ENCODE measurements at regions of chr7 and their contacts with region 1.

Region 1: GRCh38 chr7:156473476-156474240 is 166.9 kb upstream of the RNF32 start:
- DNase-seq: peak; percentile 31
- H3K4me3 ChIP-seq: no peak overlapping the region
- H3K27ac ChIP-seq: no peak overlapping the region
- H3K4me1 ChIP-seq: peaks cover 8% of the 10 kb centered on the region
- H3K27me3 ChIP-seq: no peaks in the 10 kb centered on the region
- CTCF ChIP-seq: peak; percentile 67 to 69
- POLR2A ChIP-seq: no peak

Region 2: GRCh38 chr7:155796381-155797261 is 677.0 kb before region 1 on chr7:
- CTCF ChIA-PET with region 1: no interaction called
- POLR2A ChIA-PET with region 1: no interaction called
- dilution Hi-C with region 1: no loop called
- intact Hi-C with region 1: loop called (anchors 1 kb)
- DNase-seq: no peak
- H3K4me3 ChIP-seq: no peak overlapping the region
- H3K27ac ChIP-seq: no peak overlapping the region
- H3K4me1 ChIP-seq: no peaks in the 10 kb centered on the region
- H3K27me3 ChIP-seq: peaks cover 6 to 11% of the 10 kb centered on the region in 2 experiments
- CTCF ChIP-seq: peak; percentile 63 to 97
- POLR2A ChIP-seq: no peak

Region 3: GRCh38 chr7:155804897-155805825 is 668.5 kb before region 1 on chr7:
- CTCF ChIA-PET with region 1: interaction called, 4 read pairs
- POLR2A ChIA-PET with region 1: no interaction called
- dilution Hi-C with region 1: no loop called
- intact Hi-C with region 1: loop called (anchors 2 kb)
- DNase-seq: peak; percentile 69
- H3K4me3 ChIP-seq: peak overlapping the region; percentile 12 to 56 (median 31)
- H3K27ac ChIP-seq: no peak overlapping the region
- H3K4me1 ChIP-seq: peaks cover 29% of the 10 kb centered on the region
- H3K27me3 ChIP-seq: peaks cover 14 to 58% of the 10 kb centered on the region in 2 experiments
- CTCF ChIP-seq: peak; percentile 50 to 80
- POLR2A ChIP-seq: no peak

Region 4: DNA sequence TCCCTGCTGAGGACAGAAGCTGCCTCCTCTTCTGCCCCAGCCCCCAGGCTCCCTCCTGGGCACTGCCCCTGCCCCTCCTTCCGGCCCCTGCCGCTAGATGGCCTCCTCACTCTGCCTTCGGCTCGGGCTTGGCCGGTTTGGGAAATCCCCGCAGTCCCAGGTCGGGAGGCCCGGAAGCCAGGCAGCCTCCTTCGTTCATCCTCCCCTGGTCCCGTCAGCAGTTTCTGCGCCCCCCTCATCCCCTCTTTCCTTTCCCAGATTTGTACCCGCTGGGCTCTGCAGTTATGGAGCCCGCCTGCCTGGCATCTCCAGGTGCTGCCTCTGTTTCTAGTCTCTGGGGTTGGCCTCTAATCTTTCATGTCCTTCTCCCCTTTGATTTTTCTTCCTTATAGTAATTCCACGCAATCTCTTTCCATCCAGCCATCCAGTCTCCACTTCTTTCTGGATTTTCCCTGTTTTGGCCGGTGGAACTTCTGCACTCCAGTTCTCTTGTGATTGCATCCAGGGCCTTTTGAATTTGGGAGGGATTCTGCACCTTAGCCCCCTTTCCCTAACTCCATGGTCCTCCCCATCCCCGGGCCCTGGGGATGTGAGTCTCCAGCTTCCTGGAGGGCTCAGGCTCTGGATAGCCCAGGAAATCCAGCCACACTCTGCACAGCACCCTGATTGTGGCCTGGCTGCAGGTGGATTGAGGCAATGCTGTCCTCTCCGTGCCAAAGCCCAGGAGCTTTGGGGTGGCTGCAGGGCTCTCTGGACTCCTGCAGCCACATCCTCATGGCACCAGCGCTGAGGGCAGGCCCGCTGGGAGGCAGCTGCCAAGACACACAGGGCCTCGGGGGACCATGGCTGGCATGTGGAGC is 658.1 kb before region 1 on chr7:
- CTCF ChIA-PET with region 1: interaction called, 25 read pairs
- POLR2A ChIA-PET with region 1: no interaction called
- dilution Hi-C with region 1: no loop called
- intact Hi-C with region 1: loop called (anchors 1 kb)
- DNase-seq: peak; percentile 34
- H3K4me3 ChIP-seq: no peak overlapping the region
- H3K27ac ChIP-seq: no peak overlapping the region
- H3K4me1 ChIP-seq: peaks cover 6% of the 10 kb centered on the region
- H3K27me3 ChIP-seq: peaks cover 34 to 42% of the 10 kb centered on the region in 2 experiments
- CTCF ChIP-seq: peak; percentile 31 to 88
- POLR2A ChIP-seq: no peak

Region 5: GRCh38 chr7:156607332-156608172 is 133.9 kb after region 1 on chr7:
- CTCF ChIA-PET with region 1: no interaction called
- POLR2A ChIA-PET with region 1: no interaction called
- dilution Hi-C with region 1: no loop called
- intact Hi-C with region 1: loop called (anchors 10 kb)
- DNase-seq: no peak
- H3K4me3 ChIP-seq: peak overlapping the region; percentile 42 to 57 (median 44)
- H3K27ac ChIP-seq: no peak overlapping the region
- H3K4me1 ChIP-seq: peaks cover 14% of the 10 kb centered on the region
- H3K27me3 ChIP-seq: no peaks in the 10 kb centered on the region
- CTCF ChIP-seq: no peak
- POLR2A ChIP-seq: no peak

Region 6: DNA sequence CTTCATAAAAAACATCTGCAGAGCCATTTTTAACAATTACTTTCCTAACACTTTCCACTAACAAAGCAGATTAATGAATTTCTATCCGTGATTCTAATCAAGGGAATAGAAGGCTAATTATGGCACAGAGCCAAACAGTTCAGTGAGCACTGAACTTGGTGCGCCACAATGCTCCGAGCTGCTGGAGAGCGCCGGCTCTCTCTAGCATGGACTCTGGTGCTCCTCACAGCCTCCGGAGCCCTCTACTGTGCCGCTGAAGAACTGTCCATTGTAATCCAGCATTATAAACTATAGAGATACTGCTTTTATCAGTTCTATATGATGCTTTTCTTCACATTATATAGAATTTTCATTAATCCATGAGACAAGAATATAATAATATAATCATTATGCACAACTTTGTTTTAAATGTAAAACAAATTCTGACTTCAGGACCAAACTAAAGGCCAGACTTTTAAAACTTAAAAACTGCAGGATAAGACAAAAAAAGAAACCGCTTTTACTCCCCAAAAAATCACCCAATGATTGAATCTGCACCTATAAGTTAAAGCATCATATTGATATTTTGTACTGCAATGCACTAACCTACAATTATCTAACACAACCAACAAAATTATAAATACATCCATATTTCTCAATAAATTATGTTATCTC is 290.5 kb after region 1 on chr7:
- CTCF ChIA-PET with region 1: no interaction called
- POLR2A ChIA-PET with region 1: no interaction called
- dilution Hi-C with region 1: no loop called
- intact Hi-C with region 1: loop called (anchors 1 kb)
- DNase-seq: peak; percentile 74
- H3K4me3 ChIP-seq: no peak overlapping the region
- H3K27ac ChIP-seq: no peak overlapping the region
- H3K4me1 ChIP-seq: no peaks in the 10 kb centered on the region
- H3K27me3 ChIP-seq: no peaks in the 10 kb centered on the region
- CTCF ChIP-seq: peak; percentile 61 to 65
- POLR2A ChIP-seq: no peak